ENCODE measurements at regions of chr12 and their contacts with region 1.

Region 1: GRCh38 chr12:87995581-87996178 is 33.5 kb downstream of the C12orf50 start:
- DNase-seq: peak; percentile 46
- ATAC-seq: peak; percentile 99
- H3K4me3 ChIP-seq: no peak overlapping the region
- H3K27ac ChIP-seq: no peak overlapping the region
- H3K4me1 ChIP-seq: no peaks in the 10 kb centered on the region
- H3K27me3 ChIP-seq: no peaks in the 10 kb centered on the region
- CTCF ChIP-seq: peak; percentile 85
- EP300 ChIP-seq: no peak
- POLR2A ChIP-seq: no peak
- RAD21 ChIP-seq: peak; percentile 64

Region 2: GRCh38 chr12:86256163-86256562 is 1739.5 kb before region 1 on chr12 and contains the start of gene MGAT4C:
- CTCF ChIA-PET with region 1: no interaction called
- POLR2A ChIA-PET with region 1: no interaction called
- in situ Hi-C with region 1: no loop called
- intact Hi-C with region 1: loop called (anchors 5 kb)
- DNase-seq: no peak
- ATAC-seq: no peak
- H3K4me3 ChIP-seq: no peak within 1 kb of the TSS
- H3K27ac ChIP-seq: no peak within 1 kb of the TSS
- H3K4me1 ChIP-seq: no peaks in the 10 kb centered on the region
- H3K27me3 ChIP-seq: no peaks in the 10 kb centered on the region
- CTCF ChIP-seq: no peak
- EP300 ChIP-seq: no peak
- POLR2A ChIP-seq: no peak
- RAD21 ChIP-seq: no peak
- total RNA-seq, gene MGAT4C: not detected in 2 replicates

Region 3: GRCh38 chr12:87866578-87867292 is 128.9 kb before region 1 on chr12:
- CTCF ChIA-PET with region 1: no interaction called
- POLR2A ChIA-PET with region 1: no interaction called
- in situ Hi-C with region 1: no loop called
- intact Hi-C with region 1: loop called (anchors 1 kb)
- DNase-seq: peak; percentile 14
- ATAC-seq: peak; percentile 68
- H3K4me3 ChIP-seq: no peak overlapping the region
- H3K27ac ChIP-seq: no peak overlapping the region
- H3K4me1 ChIP-seq: no peaks in the 10 kb centered on the region
- H3K27me3 ChIP-seq: no peaks in the 10 kb centered on the region
- CTCF ChIP-seq: peak; percentile 42
- EP300 ChIP-seq: no peak
- POLR2A ChIP-seq: no peak
- RAD21 ChIP-seq: no peak

Region 4: GRCh38 chr12:88052686-88053085 is 57.0 kb after region 1 on chr12:
- CTCF ChIA-PET with region 1: no interaction called
- POLR2A ChIA-PET with region 1: no interaction called
- in situ Hi-C with region 1: no loop called
- intact Hi-C with region 1: loop called (anchors 1 kb)
- DNase-seq: peak; percentile 30
- ATAC-seq: peak; percentile 95
- H3K4me3 ChIP-seq: no peak overlapping the region
- H3K27ac ChIP-seq: no peak overlapping the region
- H3K4me1 ChIP-seq: no peaks in the 10 kb centered on the region
- H3K27me3 ChIP-seq: no peaks in the 10 kb centered on the region
- CTCF ChIP-seq: peak; percentile 68
- EP300 ChIP-seq: no peak
- POLR2A ChIP-seq: no peak
- RAD21 ChIP-seq: no peak